Caco-2 (cell line): ENCODE measurements at regions of chr3 and their contacts with region 1.

Region 1: DNA sequence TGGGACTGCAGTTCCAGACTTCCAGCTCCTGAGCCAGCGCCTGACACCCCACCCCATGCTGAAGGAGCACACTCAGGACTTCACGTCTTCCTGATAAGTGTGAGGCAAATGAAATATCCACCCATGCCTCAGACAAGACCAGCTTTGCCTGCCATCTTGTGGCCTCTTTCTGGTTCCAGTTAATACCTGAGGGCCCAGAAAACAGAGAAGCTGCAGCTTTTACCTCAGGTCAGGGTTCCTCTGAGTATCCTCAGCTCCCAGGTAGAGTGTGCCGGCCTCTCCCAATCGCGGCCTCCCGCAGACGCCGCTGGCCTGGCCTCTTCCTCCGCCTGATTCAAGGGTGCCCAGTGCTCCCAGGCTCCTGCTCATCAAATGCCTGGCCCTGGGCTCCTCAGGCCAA is 5.1 kb upstream of the KLHL6 start:
- DNase-seq: peak; percentile 51 to 58
- H3K4me3 ChIP-seq: no peak overlapping the region
- H3K4me3 Mint-ChIP-seq: no peak overlapping the region
- H3K27ac Mint-ChIP-seq: no peak overlapping the region
- H3K4me1 ChIP-seq: peaks cover 9% of the 10 kb centered on the region; the same call in 1 of the 2 replicates
- H3K4me1 Mint-ChIP-seq: peaks cover 9% of the 10 kb centered on the region
- H3K27me3 ChIP-seq: no peaks in the 10 kb centered on the region
- H3K27me3 Mint-ChIP-seq: no peaks in the 10 kb centered on the region
- CTCF ChIP-seq: peak; percentile 39 to 47

Region 2: GRCh38 chr3:183481582-183481981 is 79.0 kb before region 1 on chr3:
- CTCF ChIA-PET with region 1: interaction called, 3 read pairs
- POLR2A ChIA-PET with region 1: no interaction called
- intact Hi-C with region 1: loop called (anchors 5 kb)
- DNase-seq: no peak
- H3K4me3 ChIP-seq: no peak overlapping the region
- H3K4me3 Mint-ChIP-seq: no peak overlapping the region
- H3K27ac Mint-ChIP-seq: no peak overlapping the region
- H3K4me1 ChIP-seq: no peaks in the 10 kb centered on the region
- H3K4me1 Mint-ChIP-seq: peaks cover 6% of the 10 kb centered on the region
- H3K27me3 ChIP-seq: no peaks in the 10 kb centered on the region
- H3K27me3 Mint-ChIP-seq: no peaks in the 10 kb centered on the region
- CTCF ChIP-seq: no peak

Region 3: GRCh38 chr3:183802989-183803388 is 242.4 kb after region 1 on chr3:
- CTCF ChIA-PET with region 1: no interaction called
- POLR2A ChIA-PET with region 1: no interaction called
- intact Hi-C with region 1: no loop called
- DNase-seq: no peak
- H3K4me3 ChIP-seq: no peak overlapping the region
- H3K4me3 Mint-ChIP-seq: no peak overlapping the region
- H3K27ac Mint-ChIP-seq: no peak overlapping the region
- H3K4me1 ChIP-seq: no peaks in the 10 kb centered on the region
- H3K4me1 Mint-ChIP-seq: no peaks in the 10 kb centered on the region
- H3K27me3 ChIP-seq: no peaks in the 10 kb centered on the region
- H3K27me3 Mint-ChIP-seq: no peaks in the 10 kb centered on the region
- CTCF ChIP-seq: no peak